Activated T-helper 1 cell treated with anti-CD3 and anti-CD28 coated beads, Interleukin-12 subunit alpha, Interleukin-12 subunit beta, Interleukin-2, Interleukin-4 antibody, amounts not matched to agents 30 ng/mL and 10 ng/mL and 1 ng/mL, durations not matched to agents 14 hours and 24 hours and 36 hours (primary cell): ENCODE measurements at regions of chr19 and their contacts with region 1.

Region 1: DNA sequence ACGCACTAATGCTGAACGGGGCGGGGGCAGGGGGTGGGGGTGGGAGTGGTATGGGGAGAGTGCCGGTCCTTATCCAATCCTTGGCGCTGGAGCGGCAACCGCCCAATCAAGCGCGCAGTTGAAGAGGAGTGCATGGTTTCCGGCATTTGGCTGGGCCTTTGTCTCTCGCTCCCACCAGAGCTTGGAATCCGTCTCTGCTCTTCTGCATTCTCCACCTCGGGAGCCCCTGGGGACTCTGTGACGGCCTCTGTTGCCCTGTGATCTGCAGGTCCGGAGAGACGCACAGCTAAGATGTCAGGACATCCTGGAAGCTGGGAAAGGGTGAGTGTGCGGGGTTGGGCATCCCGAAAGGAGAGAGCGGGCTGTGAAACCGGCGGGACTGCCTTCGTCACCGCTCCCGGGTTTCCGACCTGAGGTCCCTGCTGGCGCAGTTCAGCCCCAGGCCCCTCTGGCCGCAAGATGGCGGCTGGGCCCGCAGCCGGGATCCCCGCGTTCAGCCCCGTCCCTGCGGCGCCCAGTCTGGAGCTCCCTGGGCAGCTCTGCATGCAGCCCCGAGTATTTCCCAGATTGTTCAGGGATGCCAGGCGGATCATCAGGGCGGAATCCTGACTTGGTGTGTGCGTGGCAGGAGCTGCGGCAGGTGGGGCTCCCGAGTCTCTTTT is 53.6 kb upstream of the ZNF254 start:
- DNase-seq: peak; percentile 76
- H3K4me3 Mint-ChIP-seq: peak overlapping the region; percentile 100
- H3K27ac Mint-ChIP-seq: peak overlapping the region; percentile 98
- H3K4me1 Mint-ChIP-seq: peaks cover 26% of the 10 kb centered on the region
- H3K27me3 Mint-ChIP-seq: no peaks in the 10 kb centered on the region

Region 2: DNA sequence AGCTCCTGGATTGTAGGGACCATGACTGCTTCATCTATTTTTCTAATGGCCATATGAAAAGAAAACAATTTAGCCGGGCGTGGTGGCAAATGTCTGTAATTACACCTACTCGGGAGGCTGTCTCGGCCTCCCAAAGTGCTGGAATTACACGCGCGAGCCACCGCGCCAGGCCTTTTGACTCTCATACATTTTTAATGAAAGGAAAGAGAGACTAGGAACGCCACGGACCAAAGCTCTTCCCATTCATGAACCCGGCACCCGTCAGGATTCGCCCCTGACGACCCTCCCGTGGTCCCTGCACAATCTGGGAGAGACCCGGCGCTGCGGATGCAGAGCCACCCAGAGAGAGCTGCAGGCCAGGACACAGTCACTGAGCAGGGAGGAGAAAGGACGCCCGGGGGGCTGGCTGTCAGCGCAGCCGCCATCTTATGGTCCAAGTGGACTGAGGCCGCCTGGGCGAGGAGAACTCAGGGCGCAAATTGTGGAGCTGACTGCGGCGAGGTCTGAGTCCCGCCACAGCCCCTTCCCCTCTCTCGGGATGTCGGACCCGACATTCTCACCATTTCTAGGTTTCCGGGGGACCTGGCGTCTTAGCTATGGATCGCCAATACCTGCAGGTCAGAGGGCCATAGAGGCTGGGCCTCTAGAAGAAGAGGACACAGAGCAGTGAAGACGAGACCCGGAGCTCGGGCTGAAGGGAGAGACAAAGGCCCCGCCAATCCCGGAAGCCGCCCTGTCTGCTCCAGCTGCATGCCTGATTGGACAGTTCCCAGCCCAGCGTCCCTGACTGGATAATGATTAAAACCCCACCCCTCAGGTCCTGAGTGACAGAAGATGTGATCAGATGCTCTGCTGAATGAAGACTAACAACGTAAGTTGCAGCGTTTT is 275.0 kb before region 1 on chr19 and contains the start of gene ZNF681:
- intact Hi-C with region 1: loop called (anchors 1 kb)
- DNase-seq: peak; percentile 76
- H3K4me3 Mint-ChIP-seq: peak within 1 kb of the TSS; percentile 90
- H3K27ac Mint-ChIP-seq: peak within 1 kb of the TSS; percentile 83
- H3K4me1 Mint-ChIP-seq: peaks cover 13% of the 10 kb centered on the region
- H3K27me3 Mint-ChIP-seq: no peaks in the 10 kb centered on the region
- total RNA-seq, gene ZNF681: 3.0 and 3.3 TPM in 2 replicates

Region 3: DNA sequence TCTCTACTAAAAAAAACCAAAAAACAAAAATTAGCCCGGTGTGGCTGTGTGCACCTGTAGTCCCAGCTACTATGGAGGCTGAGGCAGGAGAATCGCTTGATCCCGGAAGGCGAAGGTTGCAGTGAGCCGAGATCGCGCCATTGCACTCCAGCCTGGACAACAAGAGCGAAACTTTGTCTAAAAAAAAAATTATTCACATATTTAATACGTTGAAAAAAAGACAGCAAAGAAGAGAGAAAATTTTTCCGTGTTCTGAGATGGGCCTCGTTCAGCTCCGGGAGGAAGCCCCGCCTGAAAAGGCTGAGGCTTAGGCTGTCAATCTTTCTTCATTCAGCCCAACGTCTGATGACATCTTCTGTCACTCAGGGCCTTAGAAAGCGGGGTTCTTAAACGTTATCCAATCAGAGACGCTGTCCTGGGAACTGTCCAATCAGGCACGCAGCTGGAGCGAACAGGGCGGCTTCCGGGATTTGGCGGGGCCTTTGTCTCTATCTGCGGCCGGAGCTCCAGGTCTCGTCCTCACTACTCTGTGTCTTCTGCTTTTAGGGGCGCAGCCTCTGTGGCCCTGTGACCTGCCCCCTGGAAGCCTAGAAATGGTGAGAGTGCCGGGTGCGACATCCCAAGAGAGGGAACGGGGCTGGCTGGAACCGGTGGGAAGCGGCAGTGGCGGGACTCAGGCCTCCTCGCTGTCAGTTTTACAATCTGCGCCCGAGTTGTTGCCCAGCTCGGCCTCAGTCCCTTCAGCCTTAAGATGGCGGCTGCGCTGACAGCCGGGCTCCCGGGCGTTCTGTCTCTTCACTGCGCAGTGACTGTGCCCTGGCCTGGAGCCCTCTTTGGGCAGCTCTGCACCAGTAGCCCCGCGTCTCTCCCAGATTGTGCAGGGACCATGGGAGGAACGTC is 118.8 kb before region 1 on chr19 and contains the start of gene ZNF726:
- intact Hi-C with region 1: loop called (anchors 1 kb)
- DNase-seq: peak; percentile 82
- H3K4me3 Mint-ChIP-seq: peak within 1 kb of the TSS; percentile 95
- H3K27ac Mint-ChIP-seq: peak within 1 kb of the TSS; percentile 95
- H3K4me1 Mint-ChIP-seq: no peaks in the 10 kb centered on the region
- H3K27me3 Mint-ChIP-seq: no peaks in the 10 kb centered on the region
- total RNA-seq, gene ZNF726: 10.7 and 12.6 TPM in 2 replicates

Region 4: DNA sequence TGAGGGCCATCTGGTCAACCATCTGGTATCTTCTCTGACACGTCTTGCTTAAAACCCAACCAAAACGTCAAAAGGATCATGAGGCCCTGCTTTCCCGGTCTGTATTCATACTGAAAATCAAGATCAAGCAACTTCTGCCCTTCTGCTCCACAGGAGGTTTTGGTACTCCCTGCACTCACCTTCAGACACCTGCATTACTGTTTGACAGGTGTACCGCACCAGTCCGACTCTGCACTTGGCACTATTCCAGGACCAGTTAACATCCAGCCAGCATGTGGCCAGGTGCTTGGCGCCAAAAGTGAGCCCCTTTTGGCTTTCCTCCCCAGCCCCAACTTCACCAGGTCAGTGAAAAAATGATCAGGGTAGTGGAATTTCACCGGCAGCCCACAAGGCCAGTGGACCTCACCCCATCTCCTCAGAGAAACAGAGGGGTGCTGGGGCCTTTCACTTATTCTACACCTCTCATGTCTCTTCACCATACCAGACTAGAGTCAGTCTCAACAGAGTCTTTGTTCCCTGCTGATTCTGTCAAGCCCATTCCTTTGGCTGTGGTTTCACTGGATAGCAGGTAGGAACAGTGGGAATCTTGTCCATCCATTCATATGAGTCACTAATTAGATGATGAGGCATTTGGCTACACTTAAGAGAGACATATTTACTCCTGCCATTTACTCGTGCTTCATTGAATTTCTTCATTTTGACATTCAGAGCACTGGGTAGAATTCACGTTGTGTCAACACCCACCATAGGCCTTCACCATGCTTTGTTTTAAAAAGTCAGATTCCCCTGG is 33.4 kb before region 1 on chr19:
- intact Hi-C with region 1: no loop called
- DNase-seq: no peak
- H3K4me3 Mint-ChIP-seq: no peak overlapping the region
- H3K27ac Mint-ChIP-seq: no peak overlapping the region
- H3K4me1 Mint-ChIP-seq: no peaks in the 10 kb centered on the region
- H3K27me3 Mint-ChIP-seq: no peaks in the 10 kb centered on the region

Region 5: DNA sequence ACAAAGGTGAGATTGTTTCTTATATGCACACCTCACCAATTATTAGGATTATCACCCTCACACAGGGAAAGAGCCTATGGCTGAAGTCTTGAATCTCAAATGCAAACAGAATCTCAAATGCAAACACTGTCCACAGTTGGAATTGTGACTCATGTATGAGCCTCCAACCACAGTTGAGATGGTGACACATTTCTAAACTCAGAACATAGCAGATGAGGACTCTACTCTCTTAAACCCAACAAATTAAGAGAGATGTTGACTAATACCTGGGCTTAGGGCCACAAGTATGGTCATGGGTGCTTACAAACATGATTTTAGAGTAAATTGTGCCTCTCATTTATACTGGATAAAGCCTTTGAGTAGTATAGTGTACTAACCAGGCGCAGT is 21.1 kb after region 1 on chr19:
- intact Hi-C with region 1: loop called (anchors 1 kb)
- DNase-seq: no peak
- H3K4me3 Mint-ChIP-seq: no peak overlapping the region
- H3K27ac Mint-ChIP-seq: peak overlapping the region; percentile 59
- H3K4me1 Mint-ChIP-seq: peaks cover 17% of the 10 kb centered on the region
- H3K27me3 Mint-ChIP-seq: no peaks in the 10 kb centered on the region

Region 6: DNA sequence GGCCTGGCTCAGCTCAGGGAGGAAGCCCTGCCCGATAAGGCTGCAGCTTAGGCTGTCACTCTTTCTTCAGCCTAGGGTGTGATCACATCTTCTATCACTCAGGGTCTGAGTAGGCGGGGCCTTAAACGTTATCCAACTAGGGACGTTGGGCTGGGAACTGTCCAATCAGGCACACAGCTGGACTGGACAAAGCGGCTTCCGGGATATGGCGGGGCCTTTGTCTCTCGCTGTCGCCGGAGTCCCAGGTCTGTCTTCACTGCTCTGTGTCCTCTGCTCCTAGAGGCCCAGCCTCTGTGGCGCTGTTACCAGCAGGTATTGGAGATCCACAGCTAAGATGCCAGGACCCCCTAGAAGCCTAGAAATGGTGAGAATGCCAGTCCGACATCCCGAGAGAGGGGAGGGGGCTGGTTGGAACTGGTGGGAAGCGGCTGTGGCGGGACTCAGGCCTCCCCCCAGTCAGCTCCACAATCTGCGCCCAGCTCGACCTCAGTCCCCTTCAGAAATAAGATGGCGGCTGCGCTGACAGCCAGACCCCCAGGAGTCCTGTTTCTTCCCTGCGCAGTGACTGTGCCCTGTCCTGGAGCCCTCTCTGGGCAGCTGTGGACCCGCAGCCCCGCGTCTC is 53.7 kb after region 1 on chr19 and contains the start of gene ZNF254:
- intact Hi-C with region 1: loop called (anchors 1 kb)
- DNase-seq: peak; percentile 77
- H3K4me3 Mint-ChIP-seq: peak within 1 kb of the TSS; percentile 95
- H3K27ac Mint-ChIP-seq: peak within 1 kb of the TSS; percentile 95
- H3K4me1 Mint-ChIP-seq: no peaks in the 10 kb centered on the region
- H3K27me3 Mint-ChIP-seq: no peaks in the 10 kb centered on the region
- total RNA-seq, gene ZNF254: 7.8 and 8.4 TPM in 2 replicates